PC-3 (cell line): ENCODE measurements at regions of chr5 and their contacts with region 1.

Region 1: DNA sequence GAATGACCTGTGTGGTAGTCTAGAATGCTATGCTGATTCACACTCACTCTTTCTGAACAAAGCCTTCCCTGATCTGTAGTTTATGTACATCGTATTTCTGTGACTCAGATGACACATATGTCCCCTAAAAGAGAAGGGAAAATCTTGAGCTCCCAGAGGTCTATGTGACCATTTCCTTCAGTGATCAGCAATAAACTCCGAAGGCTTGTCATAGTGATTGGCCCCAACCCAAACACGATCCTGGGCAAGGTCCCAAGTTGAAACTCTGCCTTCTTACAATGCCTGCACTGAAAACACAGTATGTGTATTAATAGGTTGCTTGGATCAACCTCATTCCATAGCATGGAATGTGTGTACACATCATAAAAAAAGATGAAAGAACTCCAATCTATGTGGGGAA is 685.8 kb downstream of the MAT2B start:
- DNase-seq: peak; percentile 78
- ATAC-seq: peak; percentile 91
- H3K4me3 ChIP-seq: no peak overlapping the region
- H3K27ac ChIP-seq: no peak overlapping the region
- H3K4me1 ChIP-seq: 0 out of 2 replicates have a peak, but pooled peaks cover 4% of the 10 kb centered on the region
- H3K27me3 ChIP-seq: no peaks in the 10 kb centered on the region
- CTCF ChIP-seq: no peak

Region 2: DNA sequence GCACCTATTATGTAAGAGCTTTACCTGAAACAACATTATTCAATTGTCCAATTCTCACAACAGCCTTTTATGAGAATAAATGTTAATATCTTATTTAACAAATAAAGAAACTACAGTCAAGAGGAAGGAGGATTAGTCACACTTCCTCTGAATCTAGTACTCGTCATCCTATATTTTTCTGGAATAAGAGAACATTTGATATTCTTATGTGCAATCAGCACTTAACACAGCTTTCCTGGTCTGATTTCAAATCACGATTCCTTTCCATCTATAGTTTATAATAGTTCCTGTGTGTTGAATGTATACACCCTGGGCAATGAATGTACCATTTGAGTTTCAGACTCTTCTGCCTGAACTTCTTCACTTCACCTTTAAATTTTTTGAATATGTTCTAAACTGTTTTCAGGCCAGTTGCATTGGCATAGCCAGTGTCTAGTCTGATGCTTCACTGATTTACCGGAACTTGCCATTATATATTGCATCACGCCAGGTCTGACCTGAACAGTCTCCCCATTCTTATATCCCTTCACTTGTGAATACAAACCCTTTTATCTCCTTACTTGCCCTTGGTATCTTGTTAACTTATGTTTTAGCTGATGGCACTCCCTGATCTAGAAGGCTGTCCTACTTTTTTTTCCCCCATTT is 12.5 kb after region 1 on chr5:
- CTCF ChIA-PET with region 1: no interaction called
- POLR2A ChIA-PET with region 1: no interaction called
- intact Hi-C with region 1: loop called (anchors 1 kb)
- DNase-seq: peak; percentile 31
- ATAC-seq: peak; percentile 79
- H3K4me3 ChIP-seq: no peak overlapping the region
- H3K27ac ChIP-seq: peak overlapping the region; percentile 70
- H3K4me1 ChIP-seq: peaks cover 9% of the 10 kb centered on the region
- H3K27me3 ChIP-seq: no peaks in the 10 kb centered on the region
- CTCF ChIP-seq: no peak

Region 3: DNA sequence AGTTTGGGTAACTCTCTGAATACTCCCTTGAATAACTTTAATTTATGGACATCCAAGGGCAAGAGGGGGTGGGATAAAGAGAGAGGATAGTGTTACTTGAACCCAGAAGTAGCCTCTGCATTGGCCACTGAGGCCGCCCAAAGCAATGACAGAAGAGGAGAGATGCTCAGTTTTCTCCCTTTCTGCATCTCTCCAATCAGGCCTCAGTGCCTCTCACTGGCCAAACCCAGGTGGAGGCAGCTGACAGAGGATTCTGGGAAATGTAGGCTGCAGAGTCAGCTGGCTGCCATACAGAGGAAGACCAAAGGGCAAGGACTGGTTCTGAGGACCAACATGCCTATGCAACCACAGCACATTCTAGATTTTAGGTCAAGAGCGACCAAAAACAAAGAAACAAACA is 33.5 kb after region 1 on chr5:
- CTCF ChIA-PET with region 1: no interaction called
- POLR2A ChIA-PET with region 1: no interaction called
- intact Hi-C with region 1: no loop called
- DNase-seq: no peak
- ATAC-seq: no peak
- H3K4me3 ChIP-seq: no peak overlapping the region
- H3K27ac ChIP-seq: no peak overlapping the region
- H3K4me1 ChIP-seq: no peaks in the 10 kb centered on the region
- H3K27me3 ChIP-seq: no peaks in the 10 kb centered on the region
- CTCF ChIP-seq: no peak

Region 4: GRCh38 chr5:164370841-164371240 is 179.6 kb after region 1 on chr5:
- CTCF ChIA-PET with region 1: no interaction called
- POLR2A ChIA-PET with region 1: no interaction called
- intact Hi-C with region 1: loop called (anchors 10 kb)
- DNase-seq: peak; percentile 63
- ATAC-seq: peak; percentile 82
- H3K4me3 ChIP-seq: no peak overlapping the region
- H3K27ac ChIP-seq: no peak overlapping the region
- H3K4me1 ChIP-seq: no peaks in the 10 kb centered on the region
- H3K27me3 ChIP-seq: no peaks in the 10 kb centered on the region
- CTCF ChIP-seq: no peak

Region 5: DNA sequence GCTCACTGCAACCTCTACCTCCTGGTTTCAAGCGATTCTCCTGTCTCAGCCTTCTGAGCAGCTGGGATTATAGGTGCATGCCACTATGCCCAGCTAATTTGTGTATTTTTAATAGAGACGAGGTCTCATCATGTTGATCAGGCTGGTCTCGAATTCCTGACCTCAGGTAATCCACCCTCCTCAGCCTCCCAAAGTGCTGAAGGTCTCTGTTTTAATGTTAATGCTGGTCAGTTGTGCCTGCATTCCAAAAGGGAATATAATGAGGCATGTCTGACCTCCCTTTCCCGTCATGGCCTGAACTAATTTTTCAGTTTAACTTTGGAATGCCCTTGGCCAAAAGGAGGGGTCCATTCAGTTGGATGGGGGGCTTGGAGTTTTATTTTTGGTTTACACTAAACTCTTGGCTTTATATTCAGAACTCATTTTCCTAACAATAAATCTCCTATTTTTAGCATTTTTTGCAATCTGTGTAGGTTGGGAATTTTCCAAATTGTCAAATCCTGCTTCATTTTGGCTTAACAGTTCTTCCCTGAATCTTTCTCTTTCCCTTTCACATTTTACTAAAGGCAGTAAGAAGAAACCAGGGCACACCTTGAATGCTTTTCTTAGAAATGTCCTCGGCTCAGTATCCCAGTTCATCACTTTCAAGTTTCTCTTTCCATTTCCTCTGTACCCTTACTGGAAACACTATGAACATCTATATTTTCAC is 489.7 kb after region 1 on chr5:
- CTCF ChIA-PET with region 1: no interaction called
- POLR2A ChIA-PET with region 1: no interaction called
- intact Hi-C with region 1: no loop called
- DNase-seq: no peak
- ATAC-seq: no peak
- H3K4me3 ChIP-seq: no peak overlapping the region
- H3K27ac ChIP-seq: no peak overlapping the region
- H3K4me1 ChIP-seq: no peaks in the 10 kb centered on the region
- H3K27me3 ChIP-seq: no peaks in the 10 kb centered on the region
- CTCF ChIP-seq: no peak

Region 6: GRCh38 chr5:164708821-164709220 is 517.6 kb after region 1 on chr5:
- CTCF ChIA-PET with region 1: no interaction called
- POLR2A ChIA-PET with region 1: no interaction called
- intact Hi-C with region 1: no loop called
- DNase-seq: no peak
- ATAC-seq: no peak
- H3K4me3 ChIP-seq: no peak overlapping the region
- H3K27ac ChIP-seq: no peak overlapping the region
- H3K4me1 ChIP-seq: no peaks in the 10 kb centered on the region
- H3K27me3 ChIP-seq: no peaks in the 10 kb centered on the region
- CTCF ChIP-seq: no peak